ENCODE measurements at regions of chr2 and their contacts with region 1.

Region 1: GRCh38 chr2:54723131-54723995 is at the start of gene EML6:
- DNase-seq: peak; percentile 94 to 99 (median 98)
- ATAC-seq: peak; percentile 96
- H3K4me3 ChIP-seq: peak within 1 kb of the TSS; percentile 81
- H3K4me3 Mint-ChIP-seq: peak within 1 kb of the TSS; percentile 90
- H3K27ac ChIP-seq: peak within 1 kb of the TSS in 1 of 2 donors; percentile 49
- H3K27ac Mint-ChIP-seq: peak within 1 kb of the TSS; percentile 28
- H3K4me1 ChIP-seq: peaks cover 22% of the 10 kb centered on the region
- H3K4me1 Mint-ChIP-seq: peaks cover 21% of the 10 kb centered on the region
- H3K27me3 ChIP-seq: peaks cover 16 to 17% of the 10 kb centered on the region in 2 experiments
- H3K27me3 Mint-ChIP-seq: peaks cover 66% of the 10 kb centered on the region
- CTCF ChIP-seq: no peak
- total RNA-seq, gene EML6: 0.22 to 0.34 TPM

Region 2: DNA sequence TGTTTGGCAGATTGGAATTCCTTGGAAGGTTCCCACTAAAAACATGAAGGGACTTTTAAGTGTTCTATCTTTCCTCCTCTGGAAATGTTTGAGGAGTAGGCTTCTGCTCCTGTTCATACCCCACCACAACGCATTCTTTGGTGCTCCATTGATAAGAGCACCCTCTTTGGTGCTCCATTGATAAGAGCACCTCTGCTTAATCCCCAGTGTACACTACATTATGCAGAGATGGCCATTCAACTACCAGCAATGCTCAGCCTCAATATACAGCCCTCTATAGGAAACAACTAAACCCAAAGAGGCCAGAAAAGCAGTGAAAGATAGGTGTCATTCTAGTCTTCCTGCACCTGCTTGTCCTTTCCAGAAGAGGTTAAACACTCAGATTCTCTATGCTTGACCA is 957.6 kb before region 1 on chr2:
- CTCF ChIA-PET with region 1: no interaction called
- POLR2A ChIA-PET with region 1: no interaction called
- intact Hi-C with region 1: no loop called
- DNase-seq: no peak
- ATAC-seq: no peak
- H3K4me3 ChIP-seq: no peak overlapping the region
- H3K4me3 Mint-ChIP-seq: peak overlapping the region; percentile 81
- H3K27ac ChIP-seq: no peak overlapping the region
- H3K27ac Mint-ChIP-seq: no peak overlapping the region
- H3K4me1 ChIP-seq: peaks cover 13% of the 10 kb centered on the region
- H3K4me1 Mint-ChIP-seq: peaks cover 34% of the 10 kb centered on the region
- H3K27me3 ChIP-seq: no peaks in the 10 kb centered on the region
- H3K27me3 Mint-ChIP-seq: no peaks in the 10 kb centered on the region
- CTCF ChIP-seq: no peak

Region 3: DNA sequence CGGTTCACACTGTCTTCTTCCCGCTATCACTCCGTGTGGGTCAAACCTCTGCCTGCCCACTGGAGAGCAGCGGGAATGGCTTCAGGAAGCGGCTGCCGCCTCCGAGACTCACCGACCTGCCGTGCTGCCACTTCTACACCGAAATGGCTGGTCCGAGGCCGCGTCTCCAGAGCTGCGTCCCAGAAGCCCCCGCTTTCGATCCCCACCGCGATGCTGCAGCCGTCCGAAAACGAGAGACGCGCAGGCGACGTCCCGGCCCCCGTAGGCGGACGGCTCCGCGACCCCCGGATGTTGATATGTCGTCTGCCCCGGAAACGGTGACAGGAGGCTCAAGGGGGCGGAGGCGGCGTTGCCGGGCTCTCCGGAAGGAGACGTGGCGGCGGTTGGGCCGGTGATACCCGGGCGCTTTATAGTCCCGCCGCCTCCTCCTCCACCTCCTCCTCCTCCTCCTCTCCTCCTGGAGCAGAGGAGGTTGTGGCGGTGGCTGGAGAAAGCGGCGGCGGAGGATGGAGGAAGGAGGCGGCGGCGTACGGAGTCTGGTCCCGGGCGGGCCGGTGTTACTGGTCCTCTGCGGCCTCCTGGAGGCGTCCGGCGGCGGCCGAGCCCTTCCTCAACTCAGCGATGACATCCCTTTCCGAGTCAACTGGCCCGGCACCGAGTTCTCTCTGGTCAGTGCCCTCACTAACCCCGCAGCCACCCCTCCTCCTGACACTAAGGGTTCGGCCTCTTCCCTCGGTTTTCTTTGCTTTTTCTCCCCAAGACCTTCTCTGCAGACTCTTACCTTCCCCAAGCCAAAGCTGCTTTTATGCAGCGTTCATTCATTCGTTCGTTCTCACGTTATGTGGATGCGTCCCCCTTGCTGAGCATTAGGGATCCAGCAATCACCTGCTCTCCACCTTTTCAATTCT is 936.4 kb before region 1 on chr2 and contains the starts of genes ASB3 and ERLEC1:
- CTCF ChIA-PET with region 1: no interaction called
- POLR2A ChIA-PET with region 1: no interaction called
- intact Hi-C with region 1: loop called in 1 of 2 experiments (anchors 5 kb)
- DNase-seq: peak; percentile 73 to 93 (median 84)
- ATAC-seq: peak; percentile 87
- H3K4me3 ChIP-seq: peak within 1 kb of the TSS; percentile 83
- H3K4me3 Mint-ChIP-seq: peak within 1 kb of the TSS; percentile 97
- H3K27ac ChIP-seq: peak within 1 kb of the TSS; percentile 79 to 87
- H3K27ac Mint-ChIP-seq: peak within 1 kb of the TSS; percentile 86
- H3K4me1 ChIP-seq: peaks cover 32% of the 10 kb centered on the region
- H3K4me1 Mint-ChIP-seq: peaks cover 59% of the 10 kb centered on the region
- H3K27me3 ChIP-seq: no peaks in the 10 kb centered on the region
- H3K27me3 Mint-ChIP-seq: no peaks in the 10 kb centered on the region
- CTCF ChIP-seq: no peak
- total RNA-seq, gene ASB3: 31.0 to 34.3 TPM
- total RNA-seq, gene ERLEC1: 14.5 to 14.7 TPM

Region 4: DNA sequence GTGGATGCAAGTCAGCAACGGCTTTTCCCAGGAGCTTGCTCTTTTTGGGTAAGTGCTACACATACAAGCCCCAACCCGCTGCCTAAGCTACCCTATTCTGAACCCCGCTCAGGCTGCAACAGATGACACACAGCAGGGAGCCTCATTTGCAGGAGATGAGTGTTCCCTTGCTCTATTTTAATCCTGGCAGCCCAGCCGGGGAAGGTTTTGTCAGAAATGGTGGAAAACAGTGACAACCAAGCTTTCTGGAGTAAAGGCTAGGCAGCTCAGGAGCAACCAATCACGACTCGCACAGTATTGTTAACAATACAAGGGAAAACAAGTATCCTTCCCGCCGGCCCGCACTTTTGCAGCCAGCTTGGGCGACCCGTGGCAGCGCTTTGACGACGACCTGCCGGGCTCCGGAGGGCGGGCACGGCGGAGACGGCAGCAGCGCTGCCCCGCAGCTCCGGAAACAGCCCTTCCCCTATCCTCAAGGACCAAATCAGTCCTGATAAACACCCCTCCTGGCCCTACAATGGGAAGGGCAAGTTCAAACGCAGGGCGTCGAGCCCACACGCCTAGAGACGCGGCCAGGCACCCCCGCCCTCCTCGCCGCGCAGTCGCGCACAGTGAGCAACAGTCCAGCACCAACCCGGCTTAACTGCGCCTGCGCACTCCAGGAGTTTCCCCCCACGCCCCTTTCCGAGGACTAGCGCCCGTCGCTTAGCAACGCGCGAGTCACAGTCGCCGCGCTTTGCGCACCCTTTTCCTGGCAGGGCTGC is 393.0 kb before region 1 on chr2:
- CTCF ChIA-PET with region 1: no interaction called
- POLR2A ChIA-PET with region 1: no interaction called
- intact Hi-C with region 1: loop called in 1 of 2 experiments (anchors 2 kb)
- DNase-seq: peak; percentile 64 to 95 (median 82)
- ATAC-seq: peak; percentile 97
- H3K4me3 ChIP-seq: peak overlapping the region; percentile 61
- H3K4me3 Mint-ChIP-seq: peak overlapping the region; percentile 93
- H3K27ac ChIP-seq: no peak overlapping the region
- H3K27ac Mint-ChIP-seq: peak overlapping the region; percentile 43
- H3K4me1 ChIP-seq: peaks cover 14% of the 10 kb centered on the region
- H3K4me1 Mint-ChIP-seq: peaks cover 11% of the 10 kb centered on the region
- H3K27me3 ChIP-seq: no peaks in the 10 kb centered on the region
- H3K27me3 Mint-ChIP-seq: peaks cover 20% of the 10 kb centered on the region
- CTCF ChIP-seq: no peak

Region 5: DNA sequence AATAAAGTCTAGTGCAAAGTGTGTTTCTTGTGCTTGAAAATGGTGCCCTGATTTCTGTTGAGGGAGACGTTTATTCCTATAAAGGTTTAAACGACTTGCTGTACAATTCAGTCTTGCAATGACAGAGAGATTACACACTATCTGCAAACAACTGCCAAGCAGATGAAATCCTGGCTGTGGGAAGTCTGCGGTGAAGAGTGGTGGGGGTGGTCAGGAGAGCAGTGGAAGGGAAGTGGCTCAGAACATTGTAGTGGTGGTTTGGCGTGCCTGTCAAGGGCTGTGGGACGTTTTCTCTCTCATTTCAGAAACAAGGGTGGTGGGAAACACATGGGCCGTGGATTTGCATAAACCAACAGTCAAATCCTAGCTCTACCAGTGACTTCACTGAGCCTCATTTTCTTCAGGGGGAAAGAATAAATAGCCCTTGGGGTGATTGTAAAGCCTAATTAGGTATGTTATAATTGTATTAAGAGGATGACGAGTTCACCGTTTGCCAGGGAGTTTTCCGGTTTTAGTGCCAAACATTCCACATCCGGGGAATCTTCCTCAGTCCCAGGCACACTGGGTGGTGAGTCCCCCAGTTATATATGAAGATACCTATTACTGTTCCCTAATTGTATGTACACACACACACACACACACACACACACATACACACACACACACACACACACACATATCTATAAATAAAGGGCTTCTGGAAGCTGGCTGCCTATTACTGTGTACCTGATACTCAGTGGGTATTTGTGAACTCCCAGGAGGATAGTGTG is 152.3 kb before region 1 on chr2:
- CTCF ChIA-PET with region 1: no interaction called
- POLR2A ChIA-PET with region 1: interaction called, 3 read pairs
- intact Hi-C with region 1: loop called in 1 of 2 experiments (anchors 2 kb)
- DNase-seq: peak in 12 of 14 experiments; percentile 39 to 87 (median 64)
- ATAC-seq: peak; percentile 14
- H3K4me3 ChIP-seq: peak overlapping the region; percentile 31
- H3K4me3 Mint-ChIP-seq: peak overlapping the region; percentile 81
- H3K27ac ChIP-seq: peak overlapping the region; percentile 89 to 98
- H3K27ac Mint-ChIP-seq: peak overlapping the region; percentile 96
- H3K4me1 ChIP-seq: peaks cover 90% of the 10 kb centered on the region
- H3K4me1 Mint-ChIP-seq: peaks cover 95% of the 10 kb centered on the region
- H3K27me3 ChIP-seq: no peaks in the 10 kb centered on the region
- H3K27me3 Mint-ChIP-seq: no peaks in the 10 kb centered on the region
- CTCF ChIP-seq: no peak

Region 6: DNA sequence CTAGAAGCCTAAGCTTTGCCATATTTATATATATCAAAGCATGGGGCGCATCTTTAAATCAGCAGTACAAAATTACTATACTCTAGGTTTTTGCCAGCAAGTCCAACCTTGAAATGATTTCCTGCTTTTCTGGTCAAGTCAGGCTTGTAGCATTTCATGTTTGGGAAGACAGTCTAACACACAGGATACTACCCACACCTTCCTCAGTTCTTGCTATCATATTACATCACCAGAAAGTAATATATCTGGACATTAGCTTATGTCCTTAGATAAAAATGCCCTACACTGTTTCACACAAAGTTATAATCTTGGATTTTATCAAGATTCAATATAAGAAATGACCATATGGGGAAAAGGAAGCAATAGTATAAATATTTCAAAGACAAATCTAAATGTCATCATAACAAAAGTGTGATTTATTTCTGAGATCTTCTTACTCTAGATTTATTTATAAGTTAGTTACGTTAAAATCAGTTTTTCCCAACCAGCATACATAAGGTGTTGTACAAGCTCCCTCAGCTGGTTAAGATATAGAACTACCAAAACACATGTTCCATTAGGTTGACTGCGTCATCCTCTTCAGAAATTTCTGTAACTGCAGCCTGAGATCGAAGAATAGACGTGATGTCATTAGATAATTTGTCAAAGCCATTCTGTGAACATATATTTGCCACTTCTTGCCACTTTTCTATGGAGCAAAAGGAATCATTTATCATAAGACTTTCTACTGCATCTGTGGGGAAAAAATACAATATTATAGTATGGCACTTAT is 452.1 kb after region 1 on chr2:
- CTCF ChIA-PET with region 1: no interaction called
- POLR2A ChIA-PET with region 1: no interaction called
- intact Hi-C with region 1: loop called (anchors 5 to 10 kb)
- DNase-seq: peak in 3 of 14 experiments; percentile 64 to 76 (median 71)
- ATAC-seq: peak; percentile 99
- H3K4me3 ChIP-seq: no peak overlapping the region
- H3K4me3 Mint-ChIP-seq: no peak overlapping the region
- H3K27ac ChIP-seq: no peak overlapping the region
- H3K27ac Mint-ChIP-seq: no peak overlapping the region
- H3K4me1 ChIP-seq: no peaks in the 10 kb centered on the region
- H3K4me1 Mint-ChIP-seq: peaks cover 10% of the 10 kb centered on the region
- H3K27me3 ChIP-seq: no peaks in the 10 kb centered on the region
- H3K27me3 Mint-ChIP-seq: no peaks in the 10 kb centered on the region
- CTCF ChIP-seq: peak; percentile 59

Region 7: GRCh38 chr2:55519938-55520885 is 796.8 kb after region 1 on chr2:
- CTCF ChIA-PET with region 1: no interaction called
- POLR2A ChIA-PET with region 1: no interaction called
- intact Hi-C with region 1: loop called in 1 of 2 experiments (anchors 5 kb)
- DNase-seq: peak; percentile 9 to 63 (median 36)
- ATAC-seq: peak; percentile 32
- H3K4me3 ChIP-seq: peak overlapping the region; percentile 73
- H3K4me3 Mint-ChIP-seq: peak overlapping the region; percentile 96
- H3K27ac ChIP-seq: peak overlapping the region; percentile 86 to 89
- H3K27ac Mint-ChIP-seq: peak overlapping the region; percentile 98
- H3K4me1 ChIP-seq: peaks cover 11% of the 10 kb centered on the region
- H3K4me1 Mint-ChIP-seq: peaks cover 17% of the 10 kb centered on the region
- H3K27me3 ChIP-seq: no peaks in the 10 kb centered on the region
- H3K27me3 Mint-ChIP-seq: no peaks in the 10 kb centered on the region
- CTCF ChIP-seq: no peak